ENCODE measurements at regions of chr20 and their contacts with region 1.

Region 1: DNA sequence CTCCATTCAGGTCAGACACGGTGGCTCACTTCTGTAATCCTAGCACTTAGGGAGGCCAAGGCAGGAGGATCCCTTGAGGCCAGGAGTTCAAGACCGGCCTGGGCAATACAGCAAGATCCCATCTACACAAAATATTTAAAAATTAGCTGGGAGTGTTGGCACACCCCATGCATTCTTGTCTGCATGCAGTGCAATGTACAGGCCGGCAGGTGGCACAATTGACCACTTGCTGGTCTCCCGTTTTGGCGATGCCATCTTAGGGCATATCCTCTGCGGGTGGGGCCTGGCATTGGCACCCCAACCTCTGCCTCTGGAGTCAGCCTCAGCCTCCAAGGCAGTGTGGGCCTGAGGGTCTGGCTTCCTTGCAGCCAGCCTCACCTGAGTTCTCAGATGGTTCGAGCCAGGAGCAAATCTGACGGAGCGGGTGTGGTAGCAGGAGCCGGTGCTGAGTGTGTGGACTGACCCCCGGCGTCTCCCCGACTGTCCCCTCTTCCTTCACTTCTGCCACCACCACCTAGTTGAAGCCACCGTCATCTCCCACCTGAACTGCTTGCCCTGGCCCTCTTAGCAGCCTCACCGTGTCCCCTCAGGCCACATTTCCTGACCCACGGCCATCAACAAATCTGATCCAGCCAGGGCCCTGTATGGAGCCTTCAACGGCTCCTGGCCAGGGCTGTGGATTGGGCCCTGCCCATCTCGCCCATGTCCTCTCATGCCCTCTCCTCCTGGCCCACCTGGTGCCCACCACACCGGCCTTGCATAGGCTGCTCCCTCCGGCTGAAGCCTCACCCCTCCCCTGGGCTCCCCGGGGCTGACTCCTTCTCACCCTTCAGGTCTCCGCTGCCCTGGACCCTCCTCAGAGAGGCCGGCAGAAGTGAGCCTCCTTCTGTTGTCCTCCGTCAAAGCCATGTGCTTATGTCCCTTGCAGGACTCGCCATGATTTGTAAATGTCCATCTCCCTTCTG is 44.0 kb downstream of the EFCAB8 start:
- DNase-seq: no peak

Region 2: DNA sequence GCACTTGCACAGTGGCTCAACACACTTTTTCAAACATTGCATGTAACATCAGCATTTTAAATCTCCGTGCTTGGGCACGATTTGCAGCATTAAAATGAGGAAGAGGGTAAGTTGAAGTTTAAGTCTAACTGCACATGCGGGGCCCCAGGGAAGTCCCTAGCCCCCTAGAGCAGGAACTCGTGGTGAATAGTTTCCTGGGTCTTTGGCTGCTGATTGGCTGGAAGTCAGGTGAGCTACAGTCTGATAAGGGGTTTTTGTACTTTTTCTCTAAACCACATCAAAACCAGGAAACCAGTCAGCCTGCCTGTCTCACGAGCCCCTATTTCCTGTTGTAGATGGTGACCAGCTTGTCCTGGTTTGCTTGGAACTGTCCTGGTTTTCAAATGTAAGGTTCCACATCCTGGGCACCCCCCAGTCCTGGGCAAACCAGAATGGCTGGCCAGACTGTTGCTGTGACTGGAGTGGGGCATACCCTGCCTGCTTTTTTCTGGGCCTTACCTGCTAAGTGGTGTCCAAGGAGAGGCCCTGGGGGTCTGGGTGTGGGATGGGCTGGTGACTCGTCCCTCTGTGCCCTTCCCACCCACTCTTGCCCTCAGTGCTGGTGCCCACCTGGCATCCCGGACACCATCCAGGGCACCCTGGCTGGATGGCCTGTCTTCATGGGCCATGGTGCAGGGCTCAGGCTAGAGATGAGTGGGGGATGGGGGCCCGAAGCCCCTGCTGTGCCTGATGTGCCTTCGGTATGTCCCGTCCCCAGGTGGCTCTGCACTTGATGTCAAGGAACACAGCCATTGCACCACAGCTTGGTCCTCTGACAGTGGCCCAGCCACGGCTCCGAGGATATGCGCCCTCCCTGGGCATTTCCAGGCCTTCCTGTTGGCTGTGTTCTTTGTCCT is 69.7 kb after region 1 on chr20:
- intact Hi-C with region 1: no loop called
- DNase-seq: no peak

Region 3: GRCh38 chr20:33005132-33005566 is 102.4 kb after region 1 on chr20:
- intact Hi-C with region 1: loop called (anchors 10 kb)
- DNase-seq: no peak

Region 4: GRCh38 chr20:33076662-33077372 is 174.1 kb after region 1 on chr20:
- intact Hi-C with region 1: loop called (anchors 5 kb)
- DNase-seq: no peak

Region 5: GRCh38 chr20:33097001-33097400 is 194.3 kb after region 1 on chr20:
- intact Hi-C with region 1: loop called (anchors 2 kb)
- DNase-seq: no peak

Region 6: DNA sequence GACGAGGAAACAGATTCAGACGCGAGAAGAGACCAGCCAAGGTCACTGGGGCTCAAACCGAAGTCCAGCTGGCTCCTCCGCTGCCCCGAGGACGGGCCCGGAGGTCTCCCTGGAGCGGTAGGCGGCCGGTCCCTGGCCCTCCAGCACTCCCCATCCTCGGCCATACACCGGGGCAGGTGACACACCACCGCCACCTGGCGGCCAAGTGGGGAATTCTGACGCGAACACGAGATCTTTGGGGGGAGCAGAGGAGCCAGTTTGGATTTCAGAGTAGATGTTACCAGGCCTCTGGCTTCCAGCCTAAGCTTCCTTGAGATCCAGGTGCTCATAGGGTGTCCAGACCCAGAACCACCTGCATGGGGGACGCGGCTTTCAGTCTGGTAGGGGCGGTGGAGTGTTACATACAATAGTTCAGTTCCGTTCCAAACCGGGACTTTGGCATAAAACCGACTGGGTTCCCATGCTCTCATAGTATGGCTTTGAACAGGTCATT is 396.4 kb after region 1 on chr20:
- intact Hi-C with region 1: loop called (anchors 2 kb)
- DNase-seq: peak; percentile 79